ENCODE measurements at regions of chr3 and their contacts with region 1.

Region 1: DNA sequence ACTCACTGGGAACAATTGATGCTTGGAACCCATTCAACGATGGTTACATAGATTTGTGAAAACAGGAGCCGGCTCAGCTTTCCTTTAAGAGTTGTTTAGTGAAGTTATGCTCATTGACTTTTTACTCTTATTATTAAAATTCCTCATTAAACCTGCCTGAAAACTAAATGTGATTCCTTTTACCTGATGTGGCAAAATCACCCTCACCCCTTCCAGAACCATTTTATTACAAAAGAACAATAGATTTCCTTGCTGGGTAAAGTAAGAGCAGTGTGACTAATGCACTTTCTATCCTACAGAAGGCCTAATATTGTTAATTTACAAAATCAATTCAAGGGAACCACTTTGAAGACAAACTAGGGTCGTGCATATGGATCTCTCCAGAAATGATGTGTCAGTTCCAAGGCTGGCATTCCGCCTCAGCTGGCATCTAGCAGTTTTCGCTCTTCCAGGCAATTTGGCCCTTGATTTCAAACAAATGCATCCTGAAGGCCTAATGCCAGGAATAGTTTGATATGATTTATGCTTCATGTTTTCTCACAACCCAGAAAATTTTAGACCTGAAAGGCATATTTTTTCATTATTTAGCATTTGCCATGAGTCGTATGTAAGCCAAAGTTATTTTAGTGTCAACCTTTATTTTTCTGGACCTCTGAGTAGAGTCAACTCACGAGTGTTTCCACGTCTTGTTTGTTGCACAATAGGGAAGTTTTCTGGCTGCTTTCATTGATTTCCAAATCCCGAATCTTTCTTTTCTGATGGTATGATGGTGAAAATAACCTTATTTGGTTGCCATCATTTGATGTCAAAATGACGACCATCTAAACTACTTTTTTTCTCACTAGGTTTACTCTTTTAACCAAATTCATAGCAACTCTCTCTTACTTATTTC is 447.8 kb downstream of the MECOM start:
- DNase-seq: no peak
- H3K4me3 ChIP-seq: no peak overlapping the region
- H3K27ac ChIP-seq: peak overlapping the region in 1 of 2 donors; percentile 4
- H3K4me1 ChIP-seq: no peaks in the 10 kb centered on the region
- H3K27me3 ChIP-seq: no peaks in the 10 kb centered on the region
- CTCF ChIP-seq: no peak
- POLR2A ChIP-seq: no peak

Region 2: GRCh38 chr3:169192643-169193042 is 23.1 kb before region 1 on chr3:
- intact Hi-C with region 1: loop called (anchors 1 kb)
- DNase-seq: no peak
- H3K4me3 ChIP-seq: no peak overlapping the region
- H3K27ac ChIP-seq: no peak overlapping the region
- H3K4me1 ChIP-seq: no peaks in the 10 kb centered on the region
- H3K27me3 ChIP-seq: no peaks in the 10 kb centered on the region
- CTCF ChIP-seq: no peak
- POLR2A ChIP-seq: no peak

Region 3: DNA sequence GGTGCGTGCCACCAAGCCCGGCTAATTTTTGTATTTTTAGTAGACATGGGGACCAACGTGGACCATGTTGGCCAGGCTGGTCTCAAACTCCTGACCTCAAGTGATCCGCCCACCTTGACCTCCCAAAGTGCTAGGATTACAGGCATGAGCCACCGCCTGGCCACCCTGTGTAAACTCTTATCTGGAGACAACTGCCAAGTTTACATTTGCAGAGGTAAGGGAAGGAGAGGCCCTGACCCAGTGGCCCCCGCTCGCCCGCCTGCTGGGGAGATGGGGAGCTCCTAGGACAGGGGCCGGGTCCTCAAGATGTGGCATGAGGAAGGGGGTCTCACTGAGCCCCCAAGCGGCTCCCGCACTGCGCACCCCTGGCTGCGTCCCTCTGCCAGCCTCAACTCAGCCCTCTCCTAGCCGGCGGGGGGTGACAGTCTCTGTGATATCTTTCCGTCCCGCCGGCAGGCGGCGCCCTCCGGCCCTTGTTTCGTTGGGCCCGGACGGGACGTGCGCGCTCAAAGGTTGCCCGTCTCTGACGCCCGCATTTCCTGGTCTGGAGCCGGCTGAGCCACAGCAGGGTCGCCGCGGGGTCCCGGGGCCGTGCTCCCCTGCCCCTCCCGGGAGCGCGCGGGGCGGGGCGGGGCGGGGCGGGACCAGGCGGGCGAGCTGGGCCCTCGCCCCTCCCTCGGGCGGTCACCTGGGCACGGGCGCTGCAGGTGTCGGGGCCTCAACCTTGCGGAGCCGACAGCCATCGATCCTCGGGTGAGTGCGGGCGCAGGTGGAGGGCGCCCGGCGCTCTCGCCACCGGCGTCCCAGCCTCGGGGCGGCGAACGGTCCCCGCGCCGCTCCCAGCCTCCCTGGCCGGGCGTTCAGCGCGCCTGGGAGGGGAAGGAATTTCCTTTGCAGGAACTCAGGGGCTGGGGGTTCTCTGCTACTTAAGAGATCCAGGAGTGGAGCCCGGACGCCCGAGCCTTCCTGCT is 822.0 kb after region 1 on chr3 and contains the start of gene GPR160:
- intact Hi-C with region 1: no loop called
- DNase-seq: peak; percentile 45 to 85
- H3K4me3 ChIP-seq: peak within 1 kb of the TSS; percentile 48 to 68 (median 68)
- H3K27ac ChIP-seq: peak within 1 kb of the TSS; percentile 42 to 49
- H3K4me1 ChIP-seq: no peaks in the 10 kb centered on the region
- H3K27me3 ChIP-seq: peaks cover 0 to 5% of the 10 kb centered on the region in 2 donors
- CTCF ChIP-seq: peak; percentile 20 to 80 (median 63)
- POLR2A ChIP-seq: no peak
- total RNA-seq, gene GPR160: 4.2 to 31.9 (median 27.9) TPM